ENCODE measurements at regions of chr6 and their contacts with region 1.

Region 1: DNA sequence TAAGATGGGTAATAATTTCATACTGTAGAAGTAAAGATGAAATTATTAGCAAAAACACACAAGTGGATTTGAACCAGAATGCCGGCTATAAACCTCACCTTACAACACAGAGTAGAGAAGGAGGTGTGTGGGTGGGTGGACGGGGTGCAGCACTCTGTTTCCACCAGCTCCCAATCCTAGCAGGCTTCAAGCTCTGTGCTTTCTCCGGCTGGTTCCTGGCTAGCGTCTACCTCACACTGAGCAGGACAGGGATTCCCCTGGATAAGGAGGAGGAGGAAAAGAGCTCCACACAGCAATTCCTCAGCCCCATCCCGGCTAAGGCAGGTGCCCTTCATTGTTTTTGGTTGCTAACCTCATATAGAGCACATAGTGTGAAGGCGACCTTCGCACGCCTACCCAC is 453.3 kb downstream of the C6orf118 start:
- DNase-seq: no peak
- CTCF ChIP-seq: no peak

Region 2: GRCh38 chr6:164845773-164846172 is 10.4 kb before region 1 on chr6:
- CTCF ChIA-PET with region 1: interaction called, 11 read pairs
- POLR2A ChIA-PET with region 1: no interaction called
- DNase-seq: no peak
- CTCF ChIP-seq: no peak

Measured in GM10248 (cell line).